GM18951 (cell line): ENCODE measurements at regions of chr2 and their contacts with region 1.

Region 1: DNA sequence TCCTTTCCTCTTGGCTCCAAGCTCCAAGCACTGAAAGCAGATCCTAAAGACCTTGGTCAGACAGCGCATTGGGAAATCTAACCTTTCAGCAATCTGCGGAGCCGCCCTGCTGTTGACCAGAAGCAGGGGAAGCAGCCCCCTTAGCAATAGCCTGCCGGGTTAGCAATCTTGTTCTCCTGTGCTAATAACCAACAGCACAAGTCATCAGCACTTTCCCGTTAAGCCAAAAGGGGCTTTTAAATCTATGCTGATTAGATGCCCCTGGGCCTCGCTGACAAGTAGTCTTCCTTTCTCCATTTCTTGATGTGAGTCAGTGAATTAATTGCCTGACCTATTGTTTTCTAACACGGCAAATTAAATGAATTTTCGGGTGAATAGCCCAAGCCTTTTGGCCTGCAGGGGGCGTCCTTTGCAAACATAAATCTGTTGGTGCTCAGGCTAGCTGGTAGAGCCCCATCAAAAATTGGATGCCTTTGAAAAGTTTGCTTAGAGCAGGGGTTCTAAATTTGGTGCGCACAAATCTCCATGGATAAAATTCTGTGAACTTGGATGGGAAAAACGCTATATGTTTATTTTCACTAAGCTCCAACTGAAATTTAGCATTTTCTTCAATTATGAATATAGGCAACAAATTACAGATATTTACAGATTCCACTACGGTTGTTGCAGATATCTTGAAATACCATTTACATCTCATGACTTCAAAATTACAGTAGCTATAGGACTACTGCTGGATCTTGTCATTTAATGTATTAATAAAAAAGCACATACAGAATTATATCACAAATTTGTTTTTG is 24.6 kb downstream of the MAIP1 start:
- POLR2A ChIP-seq: no peak

Region 2: GRCh38 chr2:199911052-199911876 is 68.8 kb before region 1 on chr2 and contains the start of gene C2orf69:
- in situ Hi-C with region 1: no loop called
- POLR2A ChIP-seq: peak; percentile 95

Region 3: DNA sequence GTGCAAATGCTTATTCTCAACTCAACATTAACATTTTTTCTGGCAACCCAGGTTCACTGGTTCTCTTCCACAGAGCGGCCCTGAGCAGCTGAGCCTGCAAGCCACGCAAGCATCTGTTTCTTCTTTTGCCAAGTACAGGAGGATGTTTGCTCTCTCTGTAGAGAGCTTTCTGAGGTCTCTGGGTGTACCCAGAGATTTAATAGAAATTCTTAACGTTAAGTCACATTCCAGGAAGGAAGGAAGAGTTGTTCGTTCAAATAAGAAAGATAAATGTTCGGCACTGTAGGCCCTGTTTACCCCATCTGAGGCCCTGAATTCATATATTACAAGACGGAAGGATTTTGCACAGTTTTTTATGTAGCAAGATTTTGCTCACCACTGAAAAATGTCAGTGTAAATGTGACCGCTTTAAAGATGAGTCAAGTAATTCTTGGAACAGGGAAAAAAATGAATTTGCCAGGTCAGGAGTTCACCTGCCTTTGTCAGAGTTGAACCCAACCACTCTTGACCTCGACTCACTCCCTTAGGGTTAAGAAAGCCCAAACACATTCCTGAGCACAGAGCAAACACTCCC is 499.7 kb after region 1 on chr2:
- in situ Hi-C with region 1: loop called (anchors 5 kb)
- POLR2A ChIP-seq: no peak

Region 4: DNA sequence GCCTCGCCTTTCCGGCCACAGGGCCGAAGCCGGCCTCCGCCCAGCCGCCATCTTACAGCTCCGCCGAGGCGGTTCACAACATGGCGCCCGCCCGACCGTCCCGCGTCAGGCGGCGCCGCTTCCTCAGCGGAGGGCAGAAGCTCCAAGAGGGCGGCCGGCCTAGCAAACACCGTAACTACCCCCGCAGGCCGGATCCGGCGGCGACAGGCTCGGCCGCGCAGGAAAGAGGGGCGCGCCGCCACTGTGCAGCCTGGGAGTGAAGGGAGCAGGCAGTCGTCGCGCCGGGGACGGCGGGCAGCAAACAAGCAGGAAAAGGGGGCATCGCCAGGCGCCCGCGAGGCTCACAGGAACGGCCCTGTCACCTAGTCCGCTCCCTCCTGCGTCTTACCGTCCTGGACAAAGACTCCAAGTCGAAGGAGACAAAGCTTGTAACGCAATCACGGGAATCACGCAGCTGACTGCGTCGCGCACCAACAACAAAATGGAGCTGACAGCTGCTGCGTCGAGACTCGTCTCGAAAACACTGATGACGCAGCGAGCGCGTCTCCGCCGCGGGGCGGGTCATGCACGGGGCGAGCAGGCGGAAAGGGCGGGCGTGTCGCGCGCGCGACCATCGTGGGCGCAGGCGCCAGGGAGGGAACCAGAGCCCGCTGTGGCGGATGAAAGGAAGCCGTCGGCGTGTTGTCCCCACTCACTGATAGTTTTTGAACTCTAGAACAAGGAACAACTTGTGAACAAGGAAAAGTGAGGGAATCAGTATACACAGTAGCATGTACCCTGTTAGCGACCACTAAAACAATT is 884.3 kb after region 1 on chr2 and contains the start of gene CLK1:
- in situ Hi-C with region 1: no loop called
- POLR2A ChIP-seq: peak; percentile 98